ENCODE measurements at regions of chr2 and their contacts with region 1.

Region 1: DNA sequence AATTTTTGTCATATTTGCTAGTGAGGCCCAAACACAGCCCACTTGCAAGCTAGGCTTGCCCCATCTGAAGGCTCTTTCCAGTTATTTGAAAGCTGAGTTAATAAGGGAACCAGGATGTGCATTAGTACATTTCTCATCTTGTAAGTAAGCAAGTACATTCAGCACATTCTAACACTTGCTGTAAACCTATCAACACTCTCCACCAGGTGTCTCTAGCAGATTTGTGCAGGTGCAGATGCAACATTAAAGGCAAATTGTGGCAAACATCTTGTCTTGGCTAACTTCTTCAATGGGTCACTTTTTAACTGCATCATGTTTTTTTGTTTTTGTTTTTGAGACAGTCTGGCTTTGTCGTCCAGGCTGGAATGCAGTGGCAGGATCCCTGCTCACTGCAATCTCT is 25.3 kb upstream of the MFSD6 start:
- DNase-seq: no peak
- H3K4me3 ChIP-seq: no peak overlapping the region
- H3K27ac ChIP-seq: no peak overlapping the region
- H3K4me1 ChIP-seq: no peaks in the 10 kb centered on the region
- H3K27me3 ChIP-seq: no peaks in the 10 kb centered on the region
- CTCF ChIP-seq: peak; percentile 42 to 51 (median 44)
- EP300 ChIP-seq: no peak
- POLR2A ChIP-seq: no peak

Region 2: DNA sequence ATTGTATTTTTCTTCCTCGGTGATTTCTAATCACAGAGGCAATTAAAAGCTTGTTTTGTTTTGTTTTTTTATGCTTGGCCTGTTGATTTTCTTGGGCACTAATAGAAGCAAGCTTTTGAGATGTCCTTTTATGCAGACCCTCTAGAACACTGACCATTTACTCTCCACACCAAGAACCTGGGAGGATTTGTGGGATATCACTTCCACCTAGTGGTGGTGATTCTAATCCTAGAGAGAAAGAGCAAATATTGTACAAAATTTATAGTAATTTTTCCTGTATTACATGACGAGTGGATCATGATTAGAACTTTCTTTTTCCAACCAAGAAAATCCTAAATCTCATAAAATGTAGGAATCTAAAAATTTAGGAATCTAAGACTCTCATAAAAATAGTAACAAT is 128.3 kb after region 1 on chr2:
- intact Hi-C with region 1: loop called (anchors 2 kb)
- DNase-seq: no peak
- H3K4me3 ChIP-seq: no peak overlapping the region
- H3K27ac ChIP-seq: no peak overlapping the region
- H3K4me1 ChIP-seq: peaks cover 0 to 11% (median 0%) of the 10 kb centered on the region in 4 donors
- H3K27me3 ChIP-seq: no peaks in the 10 kb centered on the region
- CTCF ChIP-seq: peak; percentile 5 to 63 (median 39)
- EP300 ChIP-seq: no peak
- POLR2A ChIP-seq: no peak

Region 3: GRCh38 chr2:190804182-190804795 is 421.4 kb after region 1 on chr2:
- intact Hi-C with region 1: loop called (anchors 10 kb)
- DNase-seq: no peak
- H3K4me3 ChIP-seq: no peak overlapping the region
- H3K27ac ChIP-seq: no peak overlapping the region
- H3K4me1 ChIP-seq: peaks cover 0 to 3% (median 0%) of the 10 kb centered on the region in 4 donors
- H3K27me3 ChIP-seq: no peaks in the 10 kb centered on the region
- CTCF ChIP-seq: peak; percentile 30 to 63 (median 54)
- EP300 ChIP-seq: no peak
- POLR2A ChIP-seq: no peak